HepG2 (cell line): ENCODE measurements at regions of chr6 and their contacts with region 1.

Region 1: DNA sequence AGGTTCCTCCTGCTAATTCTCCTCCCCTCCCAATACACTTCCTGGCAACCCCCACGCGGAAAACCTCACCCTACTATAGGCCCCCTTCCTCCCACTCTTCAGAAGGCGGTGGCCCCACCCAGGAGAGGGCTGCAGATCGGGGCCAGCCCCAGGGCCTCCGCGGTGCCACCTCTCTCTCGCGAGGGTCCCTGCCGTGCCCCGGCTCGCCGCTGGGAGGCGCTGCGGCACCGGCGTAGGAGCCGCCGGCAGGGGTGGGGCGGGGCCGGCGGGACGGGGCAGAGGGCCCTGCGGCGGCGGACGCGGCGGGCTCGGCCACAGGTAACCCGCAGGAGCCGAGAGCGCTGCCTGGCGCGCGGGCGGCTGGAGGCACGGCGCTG is at the start of gene ANKRD6:
- DNase-seq: peak; percentile 20
- ATAC-seq: peak; percentile 97
- H3K4me3 ChIP-seq: peak within 1 kb of the TSS; percentile 48 to 74 (median 58)
- H3K27ac ChIP-seq: no peak within 1 kb of the TSS
- H3K4me1 ChIP-seq: peaks cover 7% of the 10 kb centered on the region; the same call in 1 of the 2 replicates
- H3K27me3 ChIP-seq: peaks cover 4 to 12% of the 10 kb centered on the region in 2 experiments; a peak in 3 of 5 replicates
- CTCF ChIP-seq: peak; percentile 84
- EP300 ChIP-seq: no peak
- POLR2A ChIP-seq: no peak
- RAD21 ChIP-seq: peak; percentile 98
- total RNA-seq, gene ANKRD6: 0.13 and 0.18 TPM in 2 replicates

Region 2: DNA sequence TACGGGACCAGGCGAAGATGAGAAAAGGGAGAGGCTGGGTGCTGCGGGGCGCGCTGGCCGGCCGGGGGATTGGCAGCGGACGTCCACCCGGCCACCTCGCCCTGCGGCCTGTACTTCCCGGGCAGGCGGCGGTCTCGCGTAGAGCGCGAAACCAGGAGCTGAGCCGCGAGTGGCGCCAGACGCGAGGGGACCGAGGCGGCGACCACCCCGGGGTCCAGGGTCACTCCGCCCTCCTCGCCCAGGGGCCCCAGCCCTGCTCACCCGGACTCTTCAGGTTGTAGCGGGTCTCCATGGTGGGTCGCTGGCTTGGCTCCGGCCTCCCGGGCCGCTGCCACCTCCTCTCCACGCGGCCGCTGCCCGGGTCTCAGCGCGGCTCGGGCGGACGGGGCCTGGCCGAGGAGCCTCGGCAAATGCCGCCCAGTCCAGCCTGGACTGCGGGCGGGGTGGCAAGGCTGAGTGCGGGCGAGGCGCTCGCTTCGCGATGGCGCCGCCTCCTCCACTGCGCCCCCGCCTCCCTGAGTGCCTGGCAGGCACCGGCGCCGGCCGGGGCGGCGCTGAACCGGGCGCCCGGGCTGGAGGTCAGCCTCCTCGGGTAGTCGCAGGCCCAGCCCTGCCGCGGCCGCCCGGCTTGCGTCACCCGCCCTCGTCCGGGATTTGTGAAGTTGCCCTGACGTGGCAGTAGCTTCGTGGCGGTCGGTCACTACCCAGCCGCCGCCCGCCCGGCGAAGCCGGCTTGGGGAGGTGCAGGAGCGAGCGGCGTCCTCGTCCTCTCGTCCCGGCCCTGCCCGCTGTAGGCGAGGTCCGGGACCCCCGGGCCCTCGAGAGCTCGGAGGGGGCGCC is 80.4 kb before region 1 on chr6 and contains the start of gene UBE2J1:
- CTCF ChIA-PET with region 1: no interaction called
- POLR2A ChIA-PET with region 1: no interaction called
- in situ Hi-C with region 1: no loop called
- intact Hi-C with region 1: no loop called
- DNase-seq: peak; percentile 80
- ATAC-seq: peak; percentile 97
- H3K4me3 ChIP-seq: peak within 1 kb of the TSS; percentile 81 to 93 (median 89)
- H3K27ac ChIP-seq: peak within 1 kb of the TSS; percentile 90
- H3K4me1 ChIP-seq: peaks cover 56% of the 10 kb centered on the region
- H3K27me3 ChIP-seq: no peaks in the 10 kb centered on the region
- CTCF ChIP-seq: no peak; the same call in 1 of the 2 replicates
- EP300 ChIP-seq: 0 out of 4 replicates have a peak, but pooled peaks of 1 of the 2 experiments have one; percentile 20
- POLR2A ChIP-seq: peak; percentile 88 to 93
- RAD21 ChIP-seq: peak; percentile 27; the same call in 1 of the 2 replicates
- total RNA-seq, gene UBE2J1: 19.3 and 29.5 TPM in 2 replicates

Region 3: GRCh38 chr6:89443658-89444057 is 10.8 kb after region 1 on chr6:
- CTCF ChIA-PET with region 1: no interaction called
- POLR2A ChIA-PET with region 1: no interaction called
- in situ Hi-C with region 1: no loop called
- intact Hi-C with region 1: no loop called
- DNase-seq: no peak
- ATAC-seq: no peak
- H3K4me3 ChIP-seq: no peak overlapping the region
- H3K27ac ChIP-seq: no peak overlapping the region
- H3K4me1 ChIP-seq: no peaks in the 10 kb centered on the region
- H3K27me3 ChIP-seq: no peaks in the 10 kb centered on the region
- CTCF ChIP-seq: no peak
- EP300 ChIP-seq: no peak
- POLR2A ChIP-seq: no peak
- RAD21 ChIP-seq: no peak

Region 4: DNA sequence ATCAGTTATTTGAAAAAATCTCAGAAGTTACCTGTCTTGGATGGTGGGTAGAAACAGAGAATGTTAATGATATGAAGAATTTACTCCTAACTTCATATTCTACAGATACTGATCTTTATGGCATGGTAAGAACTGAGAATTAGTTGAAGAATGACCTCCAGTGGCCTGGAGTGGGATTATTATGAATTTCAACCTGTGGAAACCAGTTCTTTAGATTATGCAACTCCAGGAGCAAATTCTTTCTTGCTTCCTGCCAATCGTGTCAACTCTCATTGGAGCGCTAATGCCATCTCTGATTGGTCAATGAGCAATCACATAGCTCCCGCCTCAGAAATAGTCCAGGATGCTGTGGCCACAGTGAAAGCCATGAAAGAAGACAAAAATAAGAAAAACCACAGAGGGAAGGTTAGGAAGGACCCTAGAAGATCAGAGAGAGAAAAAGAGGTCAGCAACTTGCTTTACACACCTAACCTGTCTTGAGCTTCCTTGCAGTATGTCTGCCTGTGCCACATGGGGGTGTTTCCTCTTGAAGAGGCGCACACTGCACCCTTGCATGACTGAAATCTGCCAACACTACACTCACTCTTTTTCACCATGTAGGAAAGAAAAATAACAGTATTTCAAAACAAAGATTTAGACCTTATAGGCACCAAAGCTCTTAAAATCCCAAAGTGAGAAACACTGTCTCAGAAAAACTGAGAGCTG is 165.3 kb after region 1 on chr6:
- CTCF ChIA-PET with region 1: no interaction called
- POLR2A ChIA-PET with region 1: no interaction called
- in situ Hi-C with region 1: no loop called
- intact Hi-C with region 1: loop called (anchors 5 kb)
- DNase-seq: peak; percentile 64
- ATAC-seq: peak; percentile 80
- H3K4me3 ChIP-seq: no peak overlapping the region
- H3K27ac ChIP-seq: no peak overlapping the region
- H3K4me1 ChIP-seq: no peaks in the 10 kb centered on the region
- H3K27me3 ChIP-seq: no peaks in the 10 kb centered on the region
- CTCF ChIP-seq: peak; percentile 53
- EP300 ChIP-seq: no peak
- POLR2A ChIP-seq: no peak
- RAD21 ChIP-seq: no peak

Region 5: GRCh38 chr6:89610149-89610642 is 177.3 kb after region 1 on chr6:
- CTCF ChIA-PET with region 1: interaction called, 42 read pairs
- POLR2A ChIA-PET with region 1: no interaction called
- in situ Hi-C with region 1: loop called (anchors 5 kb)
- intact Hi-C with region 1: loop called (anchors 1 kb)
- DNase-seq: peak; percentile 40
- ATAC-seq: peak; percentile 93
- H3K4me3 ChIP-seq: no peak overlapping the region
- H3K27ac ChIP-seq: no peak overlapping the region
- H3K4me1 ChIP-seq: no peaks in the 10 kb centered on the region
- H3K27me3 ChIP-seq: no peaks in the 10 kb centered on the region
- CTCF ChIP-seq: peak; percentile 82
- EP300 ChIP-seq: no peak
- POLR2A ChIP-seq: no peak
- RAD21 ChIP-seq: peak; percentile 54; the same call in 1 of the 2 replicates